ENCODE measurements at regions of chr4 and their contacts with region 1.

Region 1: GRCh38 chr4:89344571-89344970 is 37.0 kb upstream of the GPRIN3 start:
- DNase-seq: no peak
- ATAC-seq: no peak
- H3K4me3 ChIP-seq: no peak overlapping the region
- H3K27ac ChIP-seq: no peak overlapping the region
- H3K4me1 ChIP-seq: no peaks in the 10 kb centered on the region
- H3K27me3 ChIP-seq: no peaks in the 10 kb centered on the region

Region 2: GRCh38 chr4:89134775-89135319 is 209.7 kb before region 1 on chr4:
- intact Hi-C with region 1: no loop called
- DNase-seq: no peak
- ATAC-seq: peak; percentile 21 to 47
- H3K4me3 ChIP-seq: no peak overlapping the region
- H3K27ac ChIP-seq: no peak overlapping the region
- H3K4me1 ChIP-seq: no peaks in the 10 kb centered on the region
- H3K27me3 ChIP-seq: no peaks in the 10 kb centered on the region

Region 3: DNA sequence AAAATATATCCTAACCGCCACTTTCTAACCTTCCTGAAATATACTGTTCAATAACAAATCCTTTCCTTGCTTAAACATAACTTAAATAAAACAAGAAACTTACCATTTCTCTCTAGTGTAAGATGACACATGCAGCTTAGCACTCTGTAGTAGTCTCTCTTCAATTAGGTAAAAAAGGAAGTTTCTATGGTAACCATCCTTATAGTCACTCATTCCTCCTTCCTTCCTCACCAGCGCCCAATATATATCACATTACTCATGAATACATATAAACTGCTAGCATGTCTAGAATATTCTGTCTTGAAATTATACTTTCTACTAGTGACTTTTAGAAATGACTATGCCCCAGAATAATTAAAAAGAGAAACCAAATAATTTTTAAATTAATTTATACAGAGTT is 380.1 kb after region 1 on chr4:
- intact Hi-C with region 1: loop called in 1 of 4 experiments (anchors 10 kb)
- DNase-seq: no peak
- ATAC-seq: no peak
- H3K4me3 ChIP-seq: no peak overlapping the region
- H3K27ac ChIP-seq: no peak overlapping the region
- H3K4me1 ChIP-seq: no peaks in the 10 kb centered on the region
- H3K27me3 ChIP-seq: no peaks in the 10 kb centered on the region

Region 4: GRCh38 chr4:90071289-90072235 is 727.0 kb after region 1 on chr4:
- intact Hi-C with region 1: no loop called
- DNase-seq: no peak
- ATAC-seq: no peak
- H3K4me3 ChIP-seq: no peak overlapping the region
- H3K27ac ChIP-seq: no peak overlapping the region
- H3K4me1 ChIP-seq: no peaks in the 10 kb centered on the region
- H3K27me3 ChIP-seq: no peaks in the 10 kb centered on the region

Measured in right cardiac atrium (tissue), 5 donors.